ENCODE measurements at regions of chr12 and their contacts with region 1.

Region 1: DNA sequence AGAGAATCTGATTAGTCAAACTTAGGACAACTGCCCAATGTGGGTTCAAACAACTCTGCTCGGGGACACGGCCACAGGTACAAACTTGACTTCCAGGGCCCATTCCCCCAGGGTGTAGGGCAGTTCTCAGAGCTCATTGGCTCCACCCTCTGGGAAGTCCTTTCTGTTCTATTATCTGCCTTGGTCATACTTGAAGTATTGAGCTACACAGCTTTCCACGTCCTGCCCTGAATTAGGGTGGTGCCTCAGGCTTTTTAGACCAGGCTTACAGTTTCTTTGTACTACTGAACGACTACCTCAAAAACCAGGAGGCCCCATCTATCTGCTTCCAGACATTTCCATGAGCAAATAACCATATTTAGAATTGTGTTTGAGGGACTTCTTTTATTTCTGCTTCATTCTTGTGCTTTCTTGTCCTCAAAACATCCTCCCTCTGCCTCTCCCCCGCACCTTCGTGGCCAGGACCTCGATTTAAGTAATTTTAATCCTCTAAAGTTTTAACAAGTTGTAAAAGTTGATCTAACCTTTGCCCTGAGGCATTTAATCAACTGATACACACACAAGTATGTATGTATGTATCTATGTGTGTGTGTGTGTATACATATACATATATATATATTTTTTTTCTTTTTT is 281.7 kb upstream of the AMIGO2 start:
- DNase-seq: peak in 8 of 9 donors; percentile 10 to 50 (median 32)
- ATAC-seq: peak; percentile 68
- H3K4me3 ChIP-seq: peak overlapping the region; percentile 48
- H3K4me3 Mint-ChIP-seq: peak overlapping the region; percentile 78 to 88 (median 84)
- H3K27ac ChIP-seq: peak overlapping the region; percentile 80
- H3K27ac Mint-ChIP-seq: peak overlapping the region in 8 of 9 donors; percentile 96 to 100 (median 98)
- H3K4me1 ChIP-seq: peaks cover 56 to 67% of the 10 kb centered on the region in 2 donors
- H3K4me1 Mint-ChIP-seq: peaks cover 52 to 68% (median 59%) of the 10 kb centered on the region in 7 donors
- H3K27me3 ChIP-seq: no peaks in the 10 kb centered on the region
- H3K27me3 Mint-ChIP-seq: no peaks in the 10 kb centered on the region

Region 2: DNA sequence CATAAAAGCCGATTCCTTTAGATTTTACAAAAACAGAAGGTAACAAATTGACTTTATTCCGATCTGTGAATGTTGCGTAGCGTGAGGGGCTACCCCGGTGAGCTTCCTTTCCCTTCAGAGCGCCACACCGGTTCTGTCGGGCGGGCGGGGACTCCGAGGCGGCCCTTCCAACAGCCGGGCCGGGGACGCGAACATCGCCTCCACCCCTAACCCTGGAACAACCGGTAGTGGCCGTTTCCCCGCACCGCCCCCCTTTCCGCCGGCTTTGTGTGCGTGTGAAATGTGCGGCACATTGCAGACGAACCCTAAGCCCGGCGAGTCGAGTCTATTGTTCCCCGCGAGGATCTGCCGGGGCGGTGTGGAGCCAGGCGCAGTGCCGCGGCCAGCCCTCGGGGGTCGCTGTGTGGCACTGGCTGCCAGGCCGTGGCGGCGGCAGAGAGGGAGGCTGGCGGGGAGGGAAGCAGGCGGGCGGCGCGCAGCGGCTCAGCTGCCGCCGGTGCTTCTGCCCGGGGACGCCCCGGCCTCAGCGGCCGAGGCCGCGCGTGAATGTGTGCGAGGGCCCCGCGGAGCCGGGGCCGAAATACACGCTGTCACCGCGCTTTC is 1632.8 kb before region 1 on chr12:
- CTCF ChIA-PET with region 1: no interaction called
- POLR2A ChIA-PET with region 1: no interaction called
- intact Hi-C with region 1: loop called in 1 of 2 experiments (anchors 10 kb)
- DNase-seq: peak; percentile 95 to 99 (median 98)
- ATAC-seq: peak; percentile 85
- H3K4me3 ChIP-seq: peak overlapping the region; percentile 91
- H3K4me3 Mint-ChIP-seq: peak overlapping the region; percentile 85 to 100 (median 98)
- H3K27ac ChIP-seq: peak overlapping the region; percentile 96
- H3K27ac Mint-ChIP-seq: peak overlapping the region; percentile 82 to 99 (median 99)
- H3K4me1 ChIP-seq: peaks cover 10 to 31% of the 10 kb centered on the region in 2 donors
- H3K4me1 Mint-ChIP-seq: peaks cover 13 to 39% (median 30%) of the 10 kb centered on the region in 7 donors
- H3K27me3 ChIP-seq: no peaks in the 10 kb centered on the region
- H3K27me3 Mint-ChIP-seq: no peaks in the 10 kb centered on the region

Region 3: GRCh38 chr12:46562625-46563228 is 798.8 kb before region 1 on chr12:
- CTCF ChIA-PET with region 1: no interaction called
- POLR2A ChIA-PET with region 1: no interaction called
- intact Hi-C with region 1: no loop called
- DNase-seq: no peak
- ATAC-seq: peak; percentile 36
- H3K4me3 ChIP-seq: no peak overlapping the region
- H3K4me3 Mint-ChIP-seq: peak overlapping the region in 1 of 10 donors; percentile 23
- H3K27ac ChIP-seq: no peak overlapping the region
- H3K27ac Mint-ChIP-seq: peak overlapping the region in 2 of 9 donors; percentile 0 to 5
- H3K4me1 ChIP-seq: no peaks in the 10 kb centered on the region
- H3K4me1 Mint-ChIP-seq: peaks cover 0 to 20% (median 7%) of the 10 kb centered on the region in 7 donors
- H3K27me3 ChIP-seq: no peaks in the 10 kb centered on the region
- H3K27me3 Mint-ChIP-seq: no peaks in the 10 kb centered on the region

Region 4: GRCh38 chr12:47032644-47033043 is 328.9 kb before region 1 on chr12:
- CTCF ChIA-PET with region 1: no interaction called
- POLR2A ChIA-PET with region 1: no interaction called
- intact Hi-C with region 1: loop called in 1 of 2 experiments (anchors 1 kb)
- DNase-seq: peak in 7 of 9 donors; percentile 48 to 74 (median 60)
- ATAC-seq: peak; percentile 83
- H3K4me3 ChIP-seq: no peak overlapping the region
- H3K4me3 Mint-ChIP-seq: peak overlapping the region in 6 of 10 donors; percentile 1 to 44 (median 28)
- H3K27ac ChIP-seq: no peak overlapping the region
- H3K27ac Mint-ChIP-seq: peak overlapping the region in 5 of 9 donors; percentile 1 to 36 (median 11)
- H3K4me1 ChIP-seq: peaks cover 0 to 6% of the 10 kb centered on the region in 2 donors
- H3K4me1 Mint-ChIP-seq: peaks cover 9 to 40% (median 24%) of the 10 kb centered on the region in 7 donors
- H3K27me3 ChIP-seq: no peaks in the 10 kb centered on the region
- H3K27me3 Mint-ChIP-seq: peaks cover 0 to 9% (median 0%) of the 10 kb centered on the region in 5 donors

Region 5: DNA sequence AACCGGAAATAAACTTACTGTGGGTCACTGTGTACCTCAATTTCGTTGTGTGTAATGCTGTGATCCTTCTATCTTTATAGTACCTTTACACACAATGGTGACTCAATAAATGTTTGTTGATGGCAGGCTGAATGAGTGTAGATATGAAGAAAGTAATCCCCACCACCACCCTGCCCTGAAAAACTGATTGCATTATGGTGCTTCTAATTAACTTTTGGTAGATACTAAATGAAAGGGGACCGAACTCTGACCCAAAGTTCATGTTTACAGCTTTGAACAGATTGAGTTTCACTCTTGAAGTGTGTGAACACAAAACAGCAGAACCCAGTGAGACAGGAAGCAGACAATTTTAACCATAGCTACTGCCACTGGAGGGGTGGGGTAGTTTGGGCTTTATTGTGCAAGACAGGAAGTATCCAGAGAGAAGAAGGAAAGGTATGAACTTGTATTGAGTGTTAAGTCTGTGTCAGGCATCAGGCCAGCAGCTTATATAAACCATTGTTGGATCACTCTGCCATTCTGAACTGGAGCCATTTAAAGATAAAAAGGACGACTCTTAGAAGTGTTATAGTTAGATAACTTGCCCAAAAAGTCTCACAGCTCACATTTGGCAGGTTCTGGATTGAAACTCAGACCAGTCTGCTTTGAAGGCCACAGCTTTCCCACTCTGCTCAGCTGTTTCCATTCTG is 84.7 kb before region 1 on chr12:
- CTCF ChIA-PET with region 1: interaction called, 3 read pairs
- POLR2A ChIA-PET with region 1: interaction called, 5 read pairs
- intact Hi-C with region 1: loop called (anchors 2 kb)
- DNase-seq: peak; percentile 12 to 89 (median 84)
- ATAC-seq: peak; percentile 97
- H3K4me3 ChIP-seq: peak overlapping the region; percentile 31
- H3K4me3 Mint-ChIP-seq: peak overlapping the region; percentile 51 to 83 (median 74)
- H3K27ac ChIP-seq: peak overlapping the region; percentile 69
- H3K27ac Mint-ChIP-seq: peak overlapping the region; percentile 90 to 98 (median 92)
- H3K4me1 ChIP-seq: peaks cover 28 to 73% of the 10 kb centered on the region in 2 donors
- H3K4me1 Mint-ChIP-seq: peaks cover 42 to 97% (median 90%) of the 10 kb centered on the region in 7 donors
- H3K27me3 ChIP-seq: no peaks in the 10 kb centered on the region
- H3K27me3 Mint-ChIP-seq: no peaks in the 10 kb centered on the region

Region 6: GRCh38 chr12:47350062-47350408 is 11.5 kb before region 1 on chr12:
- CTCF ChIA-PET with region 1: interaction called, 3 read pairs
- POLR2A ChIA-PET with region 1: interaction called, 7 read pairs
- intact Hi-C with region 1: loop called (anchors 1 kb)
- DNase-seq: peak in 4 of 9 donors; percentile 11 to 26 (median 20)
- ATAC-seq: peak; percentile 62
- H3K4me3 ChIP-seq: no peak overlapping the region
- H3K4me3 Mint-ChIP-seq: peak overlapping the region; percentile 33 to 71 (median 64)
- H3K27ac ChIP-seq: peak overlapping the region; percentile 45
- H3K27ac Mint-ChIP-seq: peak overlapping the region; percentile 78 to 94 (median 90)
- H3K4me1 ChIP-seq: peaks cover 14 to 30% of the 10 kb centered on the region in 2 donors
- H3K4me1 Mint-ChIP-seq: peaks cover 23 to 76% (median 63%) of the 10 kb centered on the region in 7 donors
- H3K27me3 ChIP-seq: no peaks in the 10 kb centered on the region
- H3K27me3 Mint-ChIP-seq: no peaks in the 10 kb centered on the region

Region 7: GRCh38 chr12:47397664-47398281 is 36.3 kb after region 1 on chr12:
- CTCF ChIA-PET with region 1: interaction called, 11 read pairs
- POLR2A ChIA-PET with region 1: interaction called, 30 read pairs
- intact Hi-C with region 1: loop called (anchors 1 kb)
- DNase-seq: peak in 8 of 9 donors; percentile 33 to 71 (median 54)
- ATAC-seq: peak; percentile 86
- H3K4me3 ChIP-seq: peak overlapping the region; percentile 20
- H3K4me3 Mint-ChIP-seq: peak overlapping the region; percentile 29 to 73 (median 64)
- H3K27ac ChIP-seq: no peak overlapping the region
- H3K27ac Mint-ChIP-seq: peak overlapping the region; percentile 61 to 98 (median 91)
- H3K4me1 ChIP-seq: peaks cover 41% of the 10 kb centered on the region in 2 donors
- H3K4me1 Mint-ChIP-seq: peaks cover 28 to 76% (median 52%) of the 10 kb centered on the region in 7 donors
- H3K27me3 ChIP-seq: no peaks in the 10 kb centered on the region
- H3K27me3 Mint-ChIP-seq: no peaks in the 10 kb centered on the region

Measured in naive thymus-derived CD4-positive, alpha-beta T cell (primary cell).